ENCODE measurements at regions of chr1 and their contacts with region 1.

Region 1: GRCh38 chr1:26999440-26999987 is 6.0 kb downstream of the TRNP1 start:
- DNase-seq: no peak
- H3K4me3 Mint-ChIP-seq: no peak overlapping the region
- H3K27ac Mint-ChIP-seq: no peak overlapping the region
- H3K4me1 Mint-ChIP-seq: peaks cover 9% of the 10 kb centered on the region
- H3K27me3 Mint-ChIP-seq: peaks cover 35% of the 10 kb centered on the region

Region 2: GRCh38 chr1:26978901-26979300 is 20.6 kb before region 1 on chr1:
- CTCF ChIA-PET with region 1: no interaction called
- POLR2A ChIA-PET with region 1: no interaction called
- DNase-seq: no peak
- H3K4me3 Mint-ChIP-seq: no peak overlapping the region
- H3K27ac Mint-ChIP-seq: no peak overlapping the region
- H3K4me1 Mint-ChIP-seq: no peaks in the 10 kb centered on the region
- H3K27me3 Mint-ChIP-seq: peaks cover 6% of the 10 kb centered on the region

Region 3: DNA sequence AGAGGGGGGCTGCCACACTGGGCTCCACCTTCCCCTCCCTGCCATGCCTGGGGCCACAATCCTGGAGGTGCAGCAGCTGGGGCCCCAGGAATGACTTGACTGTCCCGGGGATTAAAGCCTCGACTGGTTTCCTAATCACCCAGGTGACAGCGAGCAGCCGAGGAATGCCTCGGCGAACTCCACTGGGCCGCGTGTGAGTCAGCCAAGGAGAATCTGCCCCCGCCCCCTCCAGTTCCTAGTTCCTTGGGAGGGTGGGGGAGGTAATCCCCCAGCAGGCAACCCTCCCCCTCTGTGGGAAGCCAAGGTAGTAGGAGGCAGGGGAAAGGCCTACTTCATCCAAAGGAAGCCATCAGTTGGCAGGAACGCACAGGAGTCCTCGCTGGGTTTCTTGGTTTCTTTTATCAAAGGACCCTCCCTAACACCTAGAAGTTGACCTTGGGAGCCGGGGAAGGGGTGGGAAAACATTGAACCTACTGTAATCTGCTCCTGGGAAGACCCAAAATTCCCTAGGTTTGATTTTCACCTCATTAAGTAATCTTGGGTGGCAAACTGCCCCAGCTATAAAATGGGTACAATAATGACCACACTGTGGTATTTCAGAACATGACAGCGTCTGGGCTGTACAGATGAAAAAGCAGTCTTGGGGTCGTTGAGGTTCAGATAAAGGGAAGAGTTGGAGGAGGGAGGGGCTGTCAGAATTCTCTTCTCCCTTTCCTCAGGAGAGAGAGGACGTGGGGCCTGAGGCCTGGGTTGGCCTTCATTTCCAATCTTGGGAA is 11.7 kb after region 1 on chr1:
- CTCF ChIA-PET with region 1: interaction called, 30 read pairs
- POLR2A ChIA-PET with region 1: no interaction called
- DNase-seq: no peak
- H3K4me3 Mint-ChIP-seq: no peak overlapping the region
- H3K27ac Mint-ChIP-seq: no peak overlapping the region
- H3K4me1 Mint-ChIP-seq: peaks cover 11% of the 10 kb centered on the region
- H3K27me3 Mint-ChIP-seq: peaks cover 35% of the 10 kb centered on the region

Region 4: DNA sequence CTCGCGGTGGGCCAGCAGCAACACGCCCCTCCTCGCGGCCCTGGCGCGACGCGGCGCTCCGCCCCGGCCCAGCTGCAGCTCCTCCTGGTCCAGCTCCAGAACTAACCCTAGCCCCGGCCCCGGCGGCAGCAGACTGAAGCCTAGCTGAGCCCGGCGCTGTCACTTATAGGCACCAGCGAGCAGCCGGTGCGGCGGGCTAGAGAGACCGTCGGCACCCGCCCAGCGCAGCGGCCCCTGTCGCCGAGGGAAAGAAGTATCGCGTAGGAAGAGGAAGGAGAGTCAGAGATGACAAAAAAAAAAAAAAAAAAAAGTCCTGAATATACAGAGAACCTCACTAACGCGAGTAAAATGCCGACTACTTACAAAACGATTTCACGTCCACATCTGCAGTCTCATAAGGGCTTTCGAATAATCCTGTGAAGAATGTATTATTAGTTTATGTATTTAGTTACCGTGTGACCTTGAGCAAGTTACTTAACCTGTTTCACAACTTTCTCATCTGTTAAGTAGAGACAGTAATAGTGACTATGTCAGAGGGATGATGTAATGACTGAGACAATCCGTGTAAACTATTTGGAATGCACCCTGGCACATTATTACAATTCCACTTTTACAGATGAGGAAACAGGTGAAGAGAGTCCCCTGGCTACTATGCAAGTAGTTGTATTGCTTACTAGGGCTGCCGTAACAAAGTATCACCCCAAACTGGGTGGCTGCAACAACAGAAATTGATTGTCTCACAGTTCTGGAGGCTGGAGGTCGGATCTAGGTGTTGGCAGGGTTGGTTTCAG is 155.7 kb after region 1 on chr1 and contains the start of gene SLC9A1:
- CTCF ChIA-PET with region 1: no interaction called
- POLR2A ChIA-PET with region 1: no interaction called
- DNase-seq: peak; percentile 91
- H3K4me3 Mint-ChIP-seq: peak within 1 kb of the TSS; percentile 88
- H3K27ac Mint-ChIP-seq: peak within 1 kb of the TSS; percentile 100
- H3K4me1 Mint-ChIP-seq: peaks cover 45% of the 10 kb centered on the region
- H3K27me3 Mint-ChIP-seq: no peaks in the 10 kb centered on the region
- total RNA-seq, gene SLC9A1: 24.8 to 32.4 TPM

Measured in activated CD4-positive, alpha-beta T cell treated with anti-CD3 and anti-CD28 coated beads, Interleukin-2, amount 10 ng/mL, durations not matched to agents 7 days and 5 days (primary cell).